ENCODE measurements at regions of chr16 and their contacts with region 1.

Region 1: GRCh38 chr16:55989565-55989900 is 114.4 kb upstream of the CES5A start:
- DNase-seq: no peak

Region 2: DNA sequence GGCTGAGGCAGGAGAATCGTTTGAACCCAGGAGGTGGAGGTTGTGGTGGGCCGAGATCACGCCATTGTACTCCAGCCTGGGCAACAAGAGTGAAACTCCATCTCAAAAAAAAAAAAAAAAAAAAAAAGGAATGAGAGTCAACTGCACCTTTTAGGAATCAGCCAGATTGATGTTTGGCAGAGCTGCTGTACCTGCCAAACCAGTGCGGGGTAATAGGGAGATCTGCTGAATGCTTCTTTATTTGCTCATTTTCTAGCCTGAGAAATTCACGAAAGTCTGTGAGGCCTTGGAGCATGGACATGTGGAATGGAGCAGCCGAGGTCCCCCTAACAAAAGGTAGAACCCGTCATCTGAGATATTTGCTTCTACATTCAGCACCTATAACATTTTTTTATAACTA is 480.2 kb after region 1 on chr16:
- intact Hi-C with region 1: loop called in 1 of 2 experiments (anchors 5 kb)
- DNase-seq: no peak